ENCODE measurements at regions of chr21 and their contacts with region 1.

Region 1: GRCh38 chr21:44958471-44959191 is 18.8 kb downstream of the SLX9 start:
- DNase-seq: no peak
- H3K4me3 ChIP-seq: peak overlapping the region; percentile 30 to 42 (median 34)
- H3K27ac ChIP-seq: peak overlapping the region; percentile 80 to 92 (median 85)
- H3K4me1 ChIP-seq: peaks cover 77 to 90% (median 79%) of the 10 kb centered on the region in 4 donors
- H3K27me3 ChIP-seq: no peaks in the 10 kb centered on the region
- CTCF ChIP-seq: no peak
- EP300 ChIP-seq: no peak
- POLR2A ChIP-seq: no peak

Region 2: GRCh38 chr21:45041351-45041805 is 82.7 kb after region 1 on chr21:
- intact Hi-C with region 1: loop called (anchors 5 kb)
- DNase-seq: peak; percentile 97
- H3K4me3 ChIP-seq: peak overlapping the region; percentile 22 to 51 (median 32)
- H3K27ac ChIP-seq: peak overlapping the region; percentile 80 to 86 (median 82)
- H3K4me1 ChIP-seq: peaks cover 12 to 35% (median 31%) of the 10 kb centered on the region in 4 donors
- H3K27me3 ChIP-seq: no peaks in the 10 kb centered on the region
- CTCF ChIP-seq: no peak
- EP300 ChIP-seq: no peak
- POLR2A ChIP-seq: peak; percentile 56

Region 3: GRCh38 chr21:45074818-45075595 is 116.4 kb after region 1 on chr21:
- intact Hi-C with region 1: loop called (anchors 5 kb)
- DNase-seq: no peak
- H3K4me3 ChIP-seq: peak overlapping the region; percentile 74 to 96 (median 94)
- H3K27ac ChIP-seq: peak overlapping the region; percentile 85 to 99 (median 91)
- H3K4me1 ChIP-seq: peaks cover 21 to 58% (median 47%) of the 10 kb centered on the region in 4 donors
- H3K27me3 ChIP-seq: no peaks in the 10 kb centered on the region
- CTCF ChIP-seq: no peak
- EP300 ChIP-seq: no peak
- POLR2A ChIP-seq: no peak